Activated CD8-positive, alpha-beta T cell treated with anti-CD3 and anti-CD28 coated beads, Interleukin-2, amount 10 ng/mL, durations not matched to agents 7 days and 5 days (primary cell): ENCODE measurements at regions of chr3 and their contacts with region 1.

Region 1: GRCh38 chr3:49339945-49340800 is at the start of gene USP4:
- DNase-seq: peak; percentile 95
- ATAC-seq: peak; percentile 93
- H3K4me3 Mint-ChIP-seq: peak within 1 kb of the TSS; percentile 97
- H3K27ac Mint-ChIP-seq: peak within 1 kb of the TSS; percentile 100
- H3K4me1 Mint-ChIP-seq: peaks cover 47% of the 10 kb centered on the region
- H3K27me3 Mint-ChIP-seq: no peaks in the 10 kb centered on the region
- total RNA-seq, gene USP4: 72.1 to 74.0 TPM

Region 2: GRCh38 chr3:48716982-48717746 is 623.0 kb before region 1 on chr3 and contains the start of gene IP6K2:
- CTCF ChIA-PET with region 1: no interaction called
- POLR2A ChIA-PET with region 1: no interaction called
- DNase-seq: peak; percentile 99
- ATAC-seq: peak; percentile 100
- H3K4me3 Mint-ChIP-seq: peak within 1 kb of the TSS; percentile 99
- H3K27ac Mint-ChIP-seq: peak within 1 kb of the TSS; percentile 98
- H3K4me1 Mint-ChIP-seq: peaks cover 35% of the 10 kb centered on the region
- H3K27me3 Mint-ChIP-seq: peaks cover 19% of the 10 kb centered on the region
- total RNA-seq, gene IP6K2: 49.6 to 50.4 TPM

Region 3: DNA sequence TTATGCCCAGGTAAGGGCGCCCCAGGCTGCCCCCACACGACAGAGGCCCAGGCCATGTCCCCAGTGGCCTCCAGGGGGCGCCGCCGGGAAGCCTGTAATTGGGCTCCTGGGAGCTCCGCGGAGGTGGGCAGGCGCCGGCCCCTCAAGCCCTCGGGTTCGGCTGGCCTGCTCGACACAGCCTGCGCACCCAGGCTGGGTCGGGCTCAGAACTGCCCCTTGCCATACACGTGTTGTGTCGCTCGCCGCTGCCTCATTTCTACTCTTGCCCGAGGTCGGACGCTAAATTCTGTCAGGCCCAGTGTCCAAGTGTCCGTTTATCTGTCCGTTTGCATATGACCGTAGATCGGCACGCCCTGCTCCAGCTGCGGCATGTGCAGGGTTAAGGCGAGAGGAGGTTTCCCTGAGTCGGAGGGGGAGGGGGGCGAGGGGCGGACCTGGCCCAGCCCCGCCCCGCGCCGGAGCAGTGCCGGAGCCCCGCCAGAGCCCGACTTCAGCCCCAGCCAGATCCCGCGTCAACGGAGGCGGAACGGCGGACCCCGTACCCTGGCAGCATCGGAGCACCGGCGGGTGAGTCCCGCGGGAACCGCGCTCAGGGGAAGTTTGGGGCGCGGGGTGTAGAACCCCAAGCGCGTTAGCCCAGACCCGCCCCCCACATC is 168.9 kb before region 1 on chr3 and contains the start of gene KLHDC8B:
- CTCF ChIA-PET with region 1: interaction called, 22 read pairs
- POLR2A ChIA-PET with region 1: interaction called, 4 read pairs
- DNase-seq: peak; percentile 87
- ATAC-seq: peak; percentile 90
- H3K4me3 Mint-ChIP-seq: peak within 1 kb of the TSS; percentile 78
- H3K27ac Mint-ChIP-seq: peak within 1 kb of the TSS; percentile 65
- H3K4me1 Mint-ChIP-seq: peaks cover 31% of the 10 kb centered on the region
- H3K27me3 Mint-ChIP-seq: no peaks in the 10 kb centered on the region
- total RNA-seq, gene KLHDC8B: 0.81 to 1.2 TPM

Region 4: DNA sequence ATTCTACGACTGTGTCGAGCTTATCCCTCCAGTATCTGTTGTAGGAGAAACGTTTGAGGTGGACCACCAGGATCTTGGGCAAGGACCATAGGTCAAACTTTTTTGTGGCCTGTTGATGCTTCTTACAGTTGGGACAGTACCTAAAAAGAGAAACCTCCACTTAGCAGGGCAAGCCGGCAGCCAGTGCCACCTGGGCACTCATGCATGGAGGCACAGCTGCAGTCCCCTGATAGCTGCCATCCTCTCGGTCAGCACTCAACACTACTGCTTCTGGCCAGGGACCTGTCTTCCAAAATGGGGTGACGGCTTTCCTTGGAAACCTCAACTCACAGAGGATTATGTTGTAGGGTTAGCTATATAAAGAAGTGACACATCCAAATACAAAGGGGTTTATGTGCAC is 56.2 kb before region 1 on chr3:
- CTCF ChIA-PET with region 1: no interaction called
- POLR2A ChIA-PET with region 1: no interaction called
- DNase-seq: no peak
- ATAC-seq: no peak
- H3K4me3 Mint-ChIP-seq: no peak overlapping the region
- H3K27ac Mint-ChIP-seq: no peak overlapping the region
- H3K4me1 Mint-ChIP-seq: peaks cover 5% of the 10 kb centered on the region
- H3K27me3 Mint-ChIP-seq: no peaks in the 10 kb centered on the region

Region 5: GRCh38 chr3:49358217-49358883 is 18.2 kb after region 1 on chr3 and contains the start of gene GPX1:
- CTCF ChIA-PET with region 1: interaction called, 53 read pairs
- POLR2A ChIA-PET with region 1: interaction called, 36 read pairs
- DNase-seq: peak; percentile 89
- ATAC-seq: peak; percentile 86
- H3K4me3 Mint-ChIP-seq: peak within 1 kb of the TSS; percentile 95
- H3K27ac Mint-ChIP-seq: peak within 1 kb of the TSS; percentile 88
- H3K4me1 Mint-ChIP-seq: peaks cover 45% of the 10 kb centered on the region
- H3K27me3 Mint-ChIP-seq: no peaks in the 10 kb centered on the region
- total RNA-seq, gene GPX1: 115 to 119 TPM

Region 6: GRCh38 chr3:49411968-49412631 is 71.9 kb after region 1 on chr3 and contains the starts of genes RHOA and TCTA:
- CTCF ChIA-PET with region 1: interaction called, 21 read pairs
- POLR2A ChIA-PET with region 1: interaction called, 51 read pairs
- DNase-seq: peak; percentile 99
- ATAC-seq: peak; percentile 87
- H3K4me3 Mint-ChIP-seq: peak within 1 kb of the TSS; percentile 86
- H3K27ac Mint-ChIP-seq: peak within 1 kb of the TSS; percentile 95
- H3K4me1 Mint-ChIP-seq: peaks cover 64% of the 10 kb centered on the region
- H3K27me3 Mint-ChIP-seq: peaks cover 1% of the 10 kb centered on the region
- total RNA-seq, gene RHOA: 518 to 520 TPM
- total RNA-seq, gene TCTA: 19.6 to 25.2 TPM

Region 7: GRCh38 chr3:49445381-49445780 is 105.2 kb after region 1 on chr3:
- CTCF ChIA-PET with region 1: interaction called, 50 read pairs
- POLR2A ChIA-PET with region 1: interaction called, 13 read pairs
- DNase-seq: no peak
- ATAC-seq: no peak
- H3K4me3 Mint-ChIP-seq: no peak overlapping the region
- H3K27ac Mint-ChIP-seq: no peak overlapping the region
- H3K4me1 Mint-ChIP-seq: peaks cover 19% of the 10 kb centered on the region
- H3K27me3 Mint-ChIP-seq: no peaks in the 10 kb centered on the region

Region 8: GRCh38 chr3:49469936-49470713 is 130.0 kb after region 1 on chr3 and contains the start of gene DAG1:
- CTCF ChIA-PET with region 1: interaction called, 15 read pairs
- POLR2A ChIA-PET with region 1: interaction called, 7 read pairs
- DNase-seq: peak; percentile 96
- ATAC-seq: peak; percentile 92
- H3K4me3 Mint-ChIP-seq: peak within 1 kb of the TSS; percentile 86
- H3K27ac Mint-ChIP-seq: peak within 1 kb of the TSS; percentile 88
- H3K4me1 Mint-ChIP-seq: peaks cover 23% of the 10 kb centered on the region
- H3K27me3 Mint-ChIP-seq: no peaks in the 10 kb centered on the region
- total RNA-seq, gene DAG1: 18.8 to 19.7 TPM

Region 9: DNA sequence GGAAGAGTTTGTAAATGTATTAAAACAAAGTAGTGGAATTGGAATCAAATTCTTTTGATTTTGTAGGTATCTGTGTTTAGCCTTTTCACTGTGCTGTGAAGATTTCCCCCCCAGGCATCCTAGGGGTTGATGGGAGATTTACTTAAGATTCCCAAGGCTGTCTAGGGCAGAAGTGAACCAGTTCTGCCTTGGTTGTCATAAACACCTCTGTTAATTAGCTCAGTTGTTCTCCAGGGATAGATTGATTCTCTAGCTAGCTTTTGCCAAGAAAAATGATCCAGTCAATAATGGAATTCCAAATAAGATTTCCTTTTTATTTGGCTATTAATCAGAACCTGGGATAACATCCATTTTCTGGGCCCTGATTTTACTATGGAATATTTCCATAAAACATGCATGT is 142.6 kb after region 1 on chr3:
- CTCF ChIA-PET with region 1: no interaction called
- POLR2A ChIA-PET with region 1: no interaction called
- DNase-seq: no peak
- ATAC-seq: no peak
- H3K4me3 Mint-ChIP-seq: no peak overlapping the region
- H3K27ac Mint-ChIP-seq: no peak overlapping the region
- H3K4me1 Mint-ChIP-seq: peaks cover under 1% of the 10 kb centered on the region
- H3K27me3 Mint-ChIP-seq: no peaks in the 10 kb centered on the region